Ascending aorta (tissue), 2 donors: ENCODE measurements at regions of chr9 and their contacts with region 1.

Region 1: DNA sequence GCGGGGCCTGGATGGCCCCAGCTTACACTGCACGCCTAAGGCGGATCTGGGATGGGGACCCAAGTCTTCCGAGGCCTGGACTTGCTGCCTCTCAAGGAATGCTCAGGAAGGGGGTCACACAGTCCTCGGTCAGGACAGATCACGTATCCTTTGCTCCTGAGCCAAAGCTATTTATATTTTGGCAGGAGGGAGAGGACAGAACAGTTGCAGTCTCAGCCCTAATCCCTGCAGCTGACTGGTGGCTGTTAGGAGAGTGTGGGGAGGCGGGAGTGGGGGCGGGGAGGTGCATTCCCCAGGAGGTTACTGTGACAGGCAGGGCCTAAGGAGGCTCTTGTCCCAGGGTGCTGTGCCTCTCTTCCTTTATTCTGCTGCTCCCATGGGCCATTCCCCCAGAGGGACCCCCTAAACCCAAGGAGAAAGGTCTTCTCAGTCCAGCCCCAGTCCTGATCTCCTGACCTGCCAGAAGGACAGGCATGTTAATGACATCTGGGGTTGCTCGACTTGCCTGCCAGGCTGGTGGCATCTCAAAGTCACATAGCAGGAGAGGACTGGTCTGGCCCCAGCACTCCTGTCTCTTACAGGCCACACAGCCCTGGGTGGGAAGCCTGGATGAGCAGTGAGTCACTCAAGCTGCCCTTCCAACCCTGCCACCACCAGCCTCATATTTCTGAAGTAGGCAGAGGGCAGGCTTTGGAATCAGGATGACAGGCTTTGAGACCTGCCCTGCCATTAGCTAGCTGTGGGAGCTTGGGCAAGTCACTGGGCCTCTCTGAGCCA is 51.9 kb downstream of the COL27A1 start:
- DNase-seq: peak; percentile 33 to 85
- H3K4me3 ChIP-seq: no peak overlapping the region
- H3K27ac ChIP-seq: peak overlapping the region; percentile 47 to 86
- H3K4me1 ChIP-seq: peaks cover 19 to 30% of the 10 kb centered on the region in 2 donors
- H3K27me3 ChIP-seq: no peaks in the 10 kb centered on the region
- CTCF ChIP-seq: no peak

Region 2: GRCh38 chr9:114174876-114175771 is 32.1 kb before region 1 on chr9:
- intact Hi-C with region 1: loop called (anchors 2 kb)
- DNase-seq: peak in 1 of 2 donors; percentile 85
- H3K4me3 ChIP-seq: peak overlapping the region in 1 of 2 donors; percentile 9
- H3K27ac ChIP-seq: peak overlapping the region; percentile 77 to 91
- H3K4me1 ChIP-seq: peaks cover 14 to 72% of the 10 kb centered on the region in 2 donors
- H3K27me3 ChIP-seq: no peaks in the 10 kb centered on the region
- CTCF ChIP-seq: no peak

Region 3: DNA sequence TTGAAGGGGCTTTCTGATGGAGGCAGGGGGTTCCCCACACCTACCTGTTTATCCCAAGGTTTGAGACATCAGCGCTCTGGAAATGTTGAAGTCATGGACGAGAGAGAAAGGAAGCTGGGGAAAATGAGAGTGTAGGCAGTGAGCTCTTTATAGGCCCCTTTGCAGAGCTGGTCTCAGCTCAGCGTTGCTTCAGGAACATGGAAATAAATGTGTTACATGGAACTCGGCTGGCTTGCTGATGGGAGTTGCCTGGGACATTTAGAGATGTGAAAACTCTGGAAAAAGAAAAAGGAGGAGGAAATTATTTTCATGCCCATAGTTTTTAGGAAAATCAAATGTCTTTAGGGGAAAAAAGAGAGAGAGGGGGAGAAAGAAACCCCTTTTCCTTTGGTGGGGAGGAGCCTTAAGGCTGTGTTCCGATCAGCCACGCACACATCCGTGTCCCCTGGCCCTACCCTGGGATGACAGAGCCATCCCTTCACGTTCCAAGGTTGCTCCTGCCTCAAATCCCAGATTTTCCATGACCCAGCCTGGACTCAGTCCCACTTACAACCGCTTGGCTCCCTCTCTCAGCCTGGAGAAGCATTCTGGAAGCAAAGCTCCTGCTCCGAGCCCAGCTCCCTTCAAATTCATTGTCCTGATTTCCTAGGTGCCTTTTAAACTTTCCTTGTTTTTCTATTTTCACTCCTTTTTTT is 26.4 kb after region 1 on chr9:
- intact Hi-C with region 1: loop called (anchors 2 kb)
- DNase-seq: peak in 1 of 2 donors; percentile 85
- H3K4me3 ChIP-seq: no peak overlapping the region
- H3K27ac ChIP-seq: peak overlapping the region; percentile 54 to 82
- H3K4me1 ChIP-seq: peaks cover 4 to 38% of the 10 kb centered on the region in 2 donors
- H3K27me3 ChIP-seq: no peaks in the 10 kb centered on the region
- CTCF ChIP-seq: peak in 1 of 3 experiments; percentile 8